Naive thymus-derived CD4-positive, alpha-beta T cell (primary cell): ENCODE measurements at regions of chr18 and their contacts with region 1.

Region 1: DNA sequence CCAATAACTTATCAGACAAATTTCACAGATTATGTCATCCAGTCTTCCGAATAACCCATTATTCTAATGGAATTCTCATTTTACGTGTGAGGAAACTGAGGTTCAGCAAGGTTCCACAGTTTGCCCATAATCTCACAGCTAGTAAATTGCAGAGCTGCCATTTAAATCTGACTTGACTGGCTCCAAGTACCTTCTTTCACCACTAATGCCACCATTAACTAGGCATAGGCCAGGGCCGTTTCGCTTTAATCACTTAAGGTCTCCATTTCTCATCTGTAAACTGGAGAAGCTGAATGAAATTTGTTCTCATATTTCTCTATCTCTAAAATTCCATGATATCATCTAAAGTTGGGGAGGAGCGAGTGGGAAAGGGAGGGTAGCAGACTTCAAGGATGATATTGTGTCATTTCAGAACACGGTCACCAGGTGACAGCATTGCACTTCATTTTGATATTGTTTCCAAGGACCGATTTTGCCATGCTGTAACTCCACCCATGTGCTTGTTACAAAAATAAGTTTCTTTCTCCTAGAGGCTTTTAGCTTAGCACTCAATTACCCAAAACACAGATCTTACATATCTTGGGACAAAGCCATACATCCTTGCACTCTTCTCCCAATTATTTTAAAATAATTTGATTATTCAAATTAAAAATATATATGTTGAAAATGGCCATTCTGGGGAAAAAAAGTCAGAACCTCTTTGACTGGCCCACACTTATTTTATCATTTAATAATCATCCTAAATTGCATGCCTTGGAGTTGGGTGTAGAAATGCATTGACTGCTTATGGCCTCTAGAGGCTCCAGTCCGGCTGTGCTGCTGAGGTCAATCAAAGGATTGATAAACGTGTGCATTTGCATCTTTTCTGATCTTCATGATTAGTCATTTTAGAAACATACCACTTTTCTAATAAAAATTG is 123.8 kb downstream of the AKAIN1 start:
- DNase-seq: peak in 7 of 9 donors; percentile 15 to 55 (median 39)
- ATAC-seq: peak; percentile 75
- H3K4me3 ChIP-seq: no peak overlapping the region
- H3K4me3 Mint-ChIP-seq: no peak overlapping the region
- H3K27ac ChIP-seq: no peak overlapping the region
- H3K27ac Mint-ChIP-seq: no peak overlapping the region
- H3K4me1 ChIP-seq: no peaks in the 10 kb centered on the region
- H3K4me1 Mint-ChIP-seq: peaks cover 0 to 7% (median 3%) of the 10 kb centered on the region in 7 donors
- H3K27me3 ChIP-seq: no peaks in the 10 kb centered on the region
- H3K27me3 Mint-ChIP-seq: peaks cover 0 to 4% (median under 1%) of the 10 kb centered on the region in 5 donors

Region 2: GRCh38 chr18:3230401-3231334 is 1842.6 kb before region 1 on chr18:
- CTCF ChIA-PET with region 1: no interaction called
- POLR2A ChIA-PET with region 1: no interaction called
- intact Hi-C with region 1: no loop called
- DNase-seq: no peak
- ATAC-seq: no peak
- H3K4me3 ChIP-seq: no peak overlapping the region
- H3K4me3 Mint-ChIP-seq: no peak overlapping the region
- H3K27ac ChIP-seq: no peak overlapping the region
- H3K27ac Mint-ChIP-seq: no peak overlapping the region
- H3K4me1 ChIP-seq: no peaks in the 10 kb centered on the region
- H3K4me1 Mint-ChIP-seq: peaks cover 0 to 5% (median 0%) of the 10 kb centered on the region in 7 donors
- H3K27me3 ChIP-seq: no peaks in the 10 kb centered on the region
- H3K27me3 Mint-ChIP-seq: no peaks in the 10 kb centered on the region

Region 3: GRCh38 chr18:5057386-5058348 is 15.6 kb before region 1 on chr18:
- CTCF ChIA-PET with region 1: interaction called, 13 read pairs
- POLR2A ChIA-PET with region 1: no interaction called
- intact Hi-C with region 1: no loop called
- DNase-seq: peak; percentile 17 to 54 (median 48)
- ATAC-seq: peak; percentile 56
- H3K4me3 ChIP-seq: no peak overlapping the region
- H3K4me3 Mint-ChIP-seq: peak overlapping the region in 1 of 10 donors; percentile 8
- H3K27ac ChIP-seq: no peak overlapping the region
- H3K27ac Mint-ChIP-seq: peak overlapping the region in 6 of 9 donors; percentile 14 to 89 (median 42)
- H3K4me1 ChIP-seq: peaks cover 11 to 18% of the 10 kb centered on the region in 2 donors
- H3K4me1 Mint-ChIP-seq: peaks cover 14 to 25% (median 21%) of the 10 kb centered on the region in 7 donors
- H3K27me3 ChIP-seq: no peaks in the 10 kb centered on the region
- H3K27me3 Mint-ChIP-seq: peaks cover 0 to 4% (median 2%) of the 10 kb centered on the region in 5 donors

Region 4: GRCh38 chr18:5424903-5425664 is 351.8 kb after region 1 on chr18:
- CTCF ChIA-PET with region 1: no interaction called
- POLR2A ChIA-PET with region 1: no interaction called
- intact Hi-C with region 1: loop called in 1 of 2 experiments (anchors 1 kb)
- DNase-seq: peak in 6 of 9 donors; percentile 18 to 45 (median 34)
- ATAC-seq: peak; percentile 76
- H3K4me3 ChIP-seq: no peak overlapping the region
- H3K4me3 Mint-ChIP-seq: no peak overlapping the region
- H3K27ac ChIP-seq: no peak overlapping the region
- H3K27ac Mint-ChIP-seq: no peak overlapping the region
- H3K4me1 ChIP-seq: no peaks in the 10 kb centered on the region
- H3K4me1 Mint-ChIP-seq: peaks cover 0 to 11% (median 3%) of the 10 kb centered on the region in 7 donors
- H3K27me3 ChIP-seq: no peaks in the 10 kb centered on the region
- H3K27me3 Mint-ChIP-seq: peaks cover 0 to 12% (median 4%) of the 10 kb centered on the region in 5 donors

Region 5: GRCh38 chr18:5444847-5445246 is 371.6 kb after region 1 on chr18:
- CTCF ChIA-PET with region 1: no interaction called
- POLR2A ChIA-PET with region 1: no interaction called
- intact Hi-C with region 1: loop called in 1 of 2 experiments (anchors 1 kb)
- DNase-seq: no peak
- ATAC-seq: no peak
- H3K4me3 ChIP-seq: no peak overlapping the region
- H3K4me3 Mint-ChIP-seq: no peak overlapping the region
- H3K27ac ChIP-seq: no peak overlapping the region
- H3K27ac Mint-ChIP-seq: no peak overlapping the region
- H3K4me1 ChIP-seq: no peaks in the 10 kb centered on the region
- H3K4me1 Mint-ChIP-seq: peaks cover 0 to 10% (median 0%) of the 10 kb centered on the region in 7 donors
- H3K27me3 ChIP-seq: no peaks in the 10 kb centered on the region
- H3K27me3 Mint-ChIP-seq: no peaks in the 10 kb centered on the region

Region 6: DNA sequence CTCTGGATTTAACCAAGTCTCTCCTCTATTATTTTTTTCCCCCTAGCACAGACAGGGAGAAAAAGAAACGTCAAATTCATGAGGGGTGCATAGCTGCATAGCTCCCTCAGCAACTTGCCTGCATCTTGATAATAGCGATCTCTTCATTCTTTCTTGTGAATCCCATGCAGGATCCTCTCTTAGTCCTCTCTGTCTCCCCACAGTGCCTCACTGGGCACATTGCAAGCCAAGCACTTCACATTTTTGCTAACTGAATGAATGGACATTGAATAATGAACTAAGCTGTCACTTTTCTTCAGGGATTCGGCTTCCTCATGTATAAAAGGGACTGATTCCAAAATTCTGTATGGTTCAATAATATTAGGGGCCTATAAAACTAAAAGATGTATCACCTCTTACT is 473.4 kb after region 1 on chr18:
- CTCF ChIA-PET with region 1: no interaction called
- POLR2A ChIA-PET with region 1: no interaction called
- intact Hi-C with region 1: loop called in 1 of 2 experiments (anchors 1 kb)
- DNase-seq: peak in 3 of 9 donors; percentile 7 to 26 (median 16)
- ATAC-seq: peak; percentile 56
- H3K4me3 ChIP-seq: no peak overlapping the region
- H3K4me3 Mint-ChIP-seq: no peak overlapping the region
- H3K27ac ChIP-seq: no peak overlapping the region
- H3K27ac Mint-ChIP-seq: no peak overlapping the region
- H3K4me1 ChIP-seq: no peaks in the 10 kb centered on the region
- H3K4me1 Mint-ChIP-seq: peaks cover 3 to 15% (median 8%) of the 10 kb centered on the region in 7 donors
- H3K27me3 ChIP-seq: no peaks in the 10 kb centered on the region
- H3K27me3 Mint-ChIP-seq: peaks cover 34 to 50% (median 43%) of the 10 kb centered on the region in 5 donors

Region 7: DNA sequence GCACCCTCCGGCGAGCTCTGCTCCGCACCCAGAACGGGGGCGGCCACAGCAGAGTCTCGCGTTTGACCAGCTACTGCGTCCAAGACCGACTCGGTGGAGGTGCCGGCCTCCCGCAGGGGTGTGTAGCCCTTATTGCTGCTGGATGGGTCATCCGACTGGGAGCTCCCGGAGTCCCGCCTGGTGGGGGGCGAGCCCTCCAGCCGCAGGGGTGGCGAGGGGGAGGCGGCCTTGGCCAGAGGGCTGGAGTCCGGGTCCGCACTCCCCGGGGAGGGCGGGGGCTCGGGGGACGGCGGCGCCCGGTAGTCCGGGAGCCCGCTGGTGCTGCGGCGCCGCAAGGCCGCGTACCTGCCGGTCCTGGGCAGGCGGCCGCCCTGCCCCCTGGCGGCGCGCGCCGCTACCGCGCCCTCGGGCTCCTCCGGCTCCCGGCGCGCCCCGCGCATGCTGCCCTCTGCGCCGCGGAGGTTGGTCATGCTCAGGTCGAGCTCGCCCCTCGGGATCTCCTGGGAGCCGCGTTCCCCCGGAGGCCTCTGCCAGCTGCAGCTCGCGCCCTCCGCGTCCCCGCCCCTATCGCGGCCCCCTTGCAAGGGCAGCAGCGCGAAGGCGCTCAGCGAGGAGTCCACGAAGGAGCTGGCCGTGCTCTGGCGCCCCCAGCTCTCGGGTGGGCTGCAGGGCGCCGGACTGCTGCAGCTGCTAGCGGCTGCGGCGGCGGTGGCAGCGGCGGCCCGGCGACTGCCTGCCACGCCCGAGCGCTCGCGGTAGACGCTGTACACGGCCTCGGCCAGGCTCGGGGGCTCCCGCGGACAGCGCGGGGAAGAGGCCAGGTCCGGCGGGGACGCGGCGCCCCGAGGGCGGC is 817.3 kb after region 1 on chr18:
- CTCF ChIA-PET with region 1: interaction called, 3 read pairs
- POLR2A ChIA-PET with region 1: no interaction called
- intact Hi-C with region 1: loop called in 1 of 2 experiments (anchors 1 kb)
- DNase-seq: peak in 6 of 9 donors; percentile 11 to 32 (median 24)
- ATAC-seq: peak; percentile 77
- H3K4me3 ChIP-seq: no peak overlapping the region
- H3K4me3 Mint-ChIP-seq: peak overlapping the region in 7 of 10 donors; percentile 7 to 78 (median 27)
- H3K27ac ChIP-seq: no peak overlapping the region
- H3K27ac Mint-ChIP-seq: no peak overlapping the region
- H3K4me1 ChIP-seq: peaks cover 0 to 4% of the 10 kb centered on the region in 2 donors
- H3K4me1 Mint-ChIP-seq: peaks cover 0 to 23% (median 12%) of the 10 kb centered on the region in 7 donors
- H3K27me3 ChIP-seq: peaks cover 3% of the 10 kb centered on the region in 2 donors
- H3K27me3 Mint-ChIP-seq: peaks cover 60 to 70% (median 63%) of the 10 kb centered on the region in 5 donors

Region 8: DNA sequence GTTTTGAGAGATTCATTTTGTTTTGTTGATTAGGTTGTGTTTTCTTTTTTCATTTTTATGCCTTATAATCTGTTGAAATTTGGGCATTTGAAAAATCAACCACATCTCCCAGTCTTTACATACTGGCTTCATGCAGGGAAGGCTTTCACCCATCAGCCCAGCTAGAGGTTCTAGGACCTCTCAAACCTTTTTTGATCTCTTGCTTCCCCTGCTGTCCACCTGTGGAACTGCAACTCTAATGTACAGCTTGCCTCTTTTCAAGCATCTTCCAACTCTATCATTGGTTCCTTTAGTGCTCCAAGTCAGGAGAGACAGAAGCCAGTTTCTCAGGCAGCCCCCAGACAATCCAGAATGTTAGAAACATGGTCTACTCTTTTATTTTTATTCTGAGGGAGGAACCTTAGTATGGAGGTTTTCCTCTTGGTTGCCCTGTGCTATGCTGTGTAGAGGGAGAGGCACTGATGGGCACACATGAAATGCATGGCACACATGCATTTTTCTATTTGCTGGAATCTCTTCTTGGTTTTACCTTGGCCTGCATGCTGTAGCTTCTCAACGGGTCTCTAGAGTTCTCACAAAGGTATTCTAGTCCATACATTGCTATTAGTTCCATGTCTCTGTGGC is 1448.6 kb after region 1 on chr18:
- CTCF ChIA-PET with region 1: no interaction called
- POLR2A ChIA-PET with region 1: no interaction called
- intact Hi-C with region 1: no loop called
- DNase-seq: peak in 1 of 9 donors; percentile 23
- ATAC-seq: no peak
- H3K4me3 ChIP-seq: no peak overlapping the region
- H3K4me3 Mint-ChIP-seq: no peak overlapping the region
- H3K27ac ChIP-seq: no peak overlapping the region
- H3K27ac Mint-ChIP-seq: no peak overlapping the region
- H3K4me1 ChIP-seq: no peaks in the 10 kb centered on the region
- H3K4me1 Mint-ChIP-seq: no peaks in the 10 kb centered on the region
- H3K27me3 ChIP-seq: no peaks in the 10 kb centered on the region
- H3K27me3 Mint-ChIP-seq: peaks cover 0 to 4% (median 0%) of the 10 kb centered on the region in 5 donors